ENCODE measurements at regions of chr12 and their contacts with region 1.

Region 1: GRCh38 chr12:62799126-62799736 is 135.7 kb downstream of the PPM1H start:
- DNase-seq: peak in 2 of 6 donors; percentile 26 to 51
- ATAC-seq: peak; percentile 77 to 90 (median 88)
- H3K4me3 ChIP-seq: no peak overlapping the region
- H3K27ac ChIP-seq: no peak overlapping the region
- H3K4me1 ChIP-seq: no peaks in the 10 kb centered on the region
- H3K27me3 ChIP-seq: no peaks in the 10 kb centered on the region
- CTCF ChIP-seq: peak; percentile 78 to 91 (median 89)

Region 2: GRCh38 chr12:62446754-62447452 is 352.3 kb before region 1 on chr12:
- intact Hi-C with region 1: loop called in 2 of 3 experiments (anchors 5 to 10 kb)
- DNase-seq: no peak
- ATAC-seq: no peak
- H3K4me3 ChIP-seq: no peak overlapping the region
- H3K27ac ChIP-seq: no peak overlapping the region
- H3K4me1 ChIP-seq: no peaks in the 10 kb centered on the region
- H3K27me3 ChIP-seq: no peaks in the 10 kb centered on the region
- CTCF ChIP-seq: no peak

Region 3: DNA sequence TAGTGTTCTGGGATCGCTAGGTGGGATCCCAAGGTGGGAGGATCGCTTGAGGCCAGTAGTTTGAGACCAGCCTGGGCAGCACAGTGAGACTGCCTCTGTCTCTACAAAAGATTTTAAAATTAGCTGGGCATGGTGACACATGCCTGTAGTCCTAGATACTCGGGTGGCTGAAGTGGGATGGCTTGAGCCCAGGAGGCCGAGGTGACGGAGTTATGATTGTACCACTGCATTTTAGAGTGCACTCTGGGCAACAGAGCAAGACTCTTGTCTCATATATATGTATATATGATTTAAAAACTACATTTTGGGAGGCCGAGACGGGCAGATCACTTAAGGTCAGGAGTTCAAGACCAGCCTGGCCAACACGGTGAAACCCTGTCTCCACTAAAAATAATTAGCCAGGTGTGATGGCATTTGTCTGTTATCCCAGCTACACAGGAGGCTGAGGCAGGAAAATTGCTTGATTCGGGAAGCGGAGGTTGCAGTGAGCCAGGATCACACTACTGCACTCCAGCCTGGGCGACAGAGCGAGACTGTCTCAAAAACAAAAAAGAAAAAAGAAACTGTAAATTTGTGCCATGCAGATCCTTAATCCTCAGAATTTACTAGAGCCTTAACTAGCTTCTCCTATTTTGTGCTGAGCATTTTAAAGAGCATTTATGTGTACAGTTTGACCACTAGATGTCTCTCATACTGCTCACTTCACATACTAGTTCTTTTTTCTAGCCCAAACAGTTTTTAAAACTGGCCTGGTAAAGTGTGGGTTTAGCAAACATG is 217.8 kb before region 1 on chr12:
- intact Hi-C with region 1: loop called in 2 of 3 experiments (anchors 10 kb)
- DNase-seq: no peak
- ATAC-seq: peak; percentile 48 to 92 (median 88)
- H3K4me3 ChIP-seq: no peak overlapping the region
- H3K27ac ChIP-seq: no peak overlapping the region
- H3K4me1 ChIP-seq: no peaks in the 10 kb centered on the region
- H3K27me3 ChIP-seq: no peaks in the 10 kb centered on the region
- CTCF ChIP-seq: peak in 3 of 4 donors; percentile 20 to 53 (median 49)

Region 4: DNA sequence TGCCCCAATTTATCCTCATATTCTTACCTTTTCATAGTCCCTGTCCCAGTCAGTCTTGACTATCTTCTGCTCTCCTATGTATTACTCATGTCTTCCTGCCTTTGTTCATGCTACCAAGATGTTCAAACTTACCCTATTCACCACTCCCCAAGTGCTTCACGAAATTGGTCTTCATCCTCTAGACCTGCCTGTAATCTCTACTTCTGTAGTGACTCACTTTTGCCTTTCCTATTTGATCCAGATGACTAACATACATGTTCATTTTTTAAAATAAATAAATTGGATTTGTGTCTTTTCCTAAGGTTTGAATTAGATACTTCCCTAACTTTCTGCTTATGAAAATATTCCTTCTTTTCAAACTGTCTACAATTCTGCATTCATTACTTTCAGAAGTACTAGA is 243.4 kb after region 1 on chr12:
- intact Hi-C with region 1: no loop called
- DNase-seq: no peak
- ATAC-seq: no peak
- H3K4me3 ChIP-seq: no peak overlapping the region
- H3K27ac ChIP-seq: no peak overlapping the region
- H3K4me1 ChIP-seq: peaks cover 0 to 6% (median 0%) of the 10 kb centered on the region in 3 donors
- H3K27me3 ChIP-seq: no peaks in the 10 kb centered on the region
- CTCF ChIP-seq: no peak

Measured in pancreas (tissue), 10 donors.